ENCODE measurements at regions of chr9 and their contacts with region 1.

Region 1: DNA sequence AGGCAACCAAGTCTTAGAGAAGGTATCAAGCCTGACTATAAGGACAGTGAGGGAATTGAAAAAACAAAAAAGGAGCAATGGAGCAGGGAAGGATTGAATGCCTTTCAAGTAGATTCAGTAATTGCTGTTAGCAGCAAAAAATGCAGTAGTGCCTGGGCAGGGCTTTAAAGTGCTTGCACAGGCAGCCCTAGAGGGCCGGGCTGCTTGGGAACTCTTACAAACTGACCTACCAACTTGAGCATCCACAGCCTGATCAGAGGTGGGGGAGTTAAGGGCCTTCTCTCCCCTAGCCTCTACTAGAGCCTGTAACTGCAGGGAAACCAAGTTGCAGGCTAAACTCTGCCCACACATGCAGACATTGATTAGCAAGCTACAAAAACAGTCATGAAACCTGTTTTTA is 19.4 kb downstream of the FXN start:
- DNase-seq: no peak
- H3K4me3 ChIP-seq: no peak overlapping the region
- H3K27ac ChIP-seq: peak overlapping the region in 2 of 5 donors; percentile 18 to 20
- H3K4me1 ChIP-seq: peaks cover 0 to 26% (median 16%) of the 10 kb centered on the region in 4 donors
- H3K27me3 ChIP-seq: no peaks in the 10 kb centered on the region
- CTCF ChIP-seq: no peak
- EP300 ChIP-seq: no peak
- POLR2A ChIP-seq: no peak

Region 2: GRCh38 chr9:68822596-68823165 is 232.3 kb before region 1 on chr9:
- intact Hi-C with region 1: no loop called
- DNase-seq: peak in 1 of 2 donors; percentile 62
- H3K4me3 ChIP-seq: no peak overlapping the region
- H3K27ac ChIP-seq: peak overlapping the region in 2 of 5 donors; percentile 13 to 49
- H3K4me1 ChIP-seq: peaks cover 0 to 19% (median 17%) of the 10 kb centered on the region in 4 donors
- H3K27me3 ChIP-seq: no peaks in the 10 kb centered on the region
- CTCF ChIP-seq: no peak
- EP300 ChIP-seq: no peak
- POLR2A ChIP-seq: no peak

Region 3: DNA sequence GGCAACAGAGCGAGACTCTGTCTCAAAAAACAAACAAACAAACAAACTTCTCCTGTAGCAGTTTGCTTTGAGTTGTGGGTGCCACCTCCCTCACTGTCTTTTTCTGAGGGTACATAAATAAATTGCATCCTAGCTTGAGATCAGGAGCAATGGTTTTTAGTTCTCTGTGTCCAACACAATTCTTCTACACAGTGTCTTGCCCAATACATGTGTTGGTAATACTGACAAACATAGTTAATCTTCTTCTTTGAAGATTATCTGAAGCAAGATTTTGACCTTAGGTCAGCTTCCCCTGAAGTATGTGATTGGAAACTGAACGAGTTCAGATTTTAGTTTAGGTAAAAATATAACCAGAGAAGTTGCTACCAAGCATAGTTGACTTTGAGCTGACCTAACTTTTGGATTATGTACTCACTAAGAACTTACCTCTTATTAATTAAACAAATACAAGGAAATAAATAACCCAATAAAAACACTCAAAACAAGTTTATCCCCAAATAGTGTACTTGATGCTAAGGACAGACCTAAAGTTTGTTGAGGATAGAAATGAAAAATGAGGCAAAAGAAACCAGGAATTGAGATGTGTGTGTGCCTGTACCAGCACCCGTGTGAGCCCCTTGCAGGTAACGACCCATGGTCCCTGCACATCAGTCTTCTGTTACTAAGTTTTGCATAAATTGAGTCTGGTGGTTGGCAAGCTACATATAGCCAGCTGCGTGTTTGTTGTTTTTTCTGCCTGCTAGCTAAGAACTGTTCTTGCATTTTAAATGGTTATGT is 135.3 kb after region 1 on chr9:
- intact Hi-C with region 1: loop called (anchors 5 kb)
- DNase-seq: no peak
- H3K4me3 ChIP-seq: no peak overlapping the region
- H3K27ac ChIP-seq: no peak overlapping the region
- H3K4me1 ChIP-seq: peaks cover 60 to 99% (median 82%) of the 10 kb centered on the region in 4 donors
- H3K27me3 ChIP-seq: no peaks in the 10 kb centered on the region
- CTCF ChIP-seq: no peak
- EP300 ChIP-seq: no peak
- POLR2A ChIP-seq: no peak

Measured in stomach (tissue), 19 donors.